Sigmoid colon (tissue), 7 donors: ENCODE measurements at regions of chr2 and their contacts with region 1.

Region 1: DNA sequence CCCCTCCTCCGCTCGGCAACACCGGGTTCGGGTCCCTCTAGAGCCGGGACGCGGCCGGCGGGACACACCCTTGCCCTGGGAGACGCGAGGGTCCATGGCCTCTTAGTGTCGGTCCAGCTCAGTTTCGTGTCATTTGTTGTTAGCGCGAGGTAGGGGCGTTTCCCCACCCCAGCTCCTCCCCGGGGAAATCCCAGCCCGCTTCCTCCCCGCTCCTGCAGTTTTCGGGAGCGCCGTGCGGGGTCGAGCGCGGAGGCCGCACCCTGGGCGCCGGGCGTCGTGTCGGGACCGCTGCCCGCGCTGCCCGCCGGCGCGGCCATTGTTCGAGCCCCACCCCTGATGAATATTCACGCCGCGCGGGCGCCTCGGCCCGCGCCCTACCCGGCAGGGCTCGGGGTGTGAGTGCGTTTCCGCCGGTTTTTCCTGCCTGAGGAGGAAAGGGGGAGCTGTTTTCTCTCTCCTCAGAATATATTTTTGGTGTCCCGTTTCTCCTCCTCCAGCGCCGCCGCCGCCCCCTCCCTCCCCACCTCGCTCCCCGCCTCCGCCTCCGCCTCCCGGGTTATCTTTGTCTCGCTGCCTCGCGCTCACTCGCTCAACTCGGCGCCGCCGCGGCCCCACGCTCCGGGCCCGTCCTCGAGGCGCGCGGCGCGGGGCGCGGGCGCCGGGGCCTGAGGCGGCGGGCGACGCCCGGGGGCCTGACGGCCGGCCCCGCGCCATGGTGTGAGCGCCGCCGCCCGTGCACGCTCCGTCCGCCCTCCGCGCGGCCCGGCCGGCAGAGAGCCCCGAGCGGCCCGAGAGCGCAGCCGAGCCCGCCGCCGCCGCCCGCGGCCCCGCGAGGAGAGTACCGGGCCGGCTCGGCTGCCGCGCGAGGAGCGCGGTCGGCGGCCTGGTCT is at the start of gene MAP4K4:
- DNase-seq: peak; percentile 92
- H3K4me3 ChIP-seq: peak within 1 kb of the TSS; percentile 64 to 76 (median 68)
- H3K27ac ChIP-seq: peak within 1 kb of the TSS; percentile 88 to 90 (median 88)
- H3K4me1 ChIP-seq: peaks cover 0 to 41% (median 17%) of the 10 kb centered on the region in 4 donors
- H3K27me3 ChIP-seq: no peaks in the 10 kb centered on the region
- CTCF ChIP-seq: peak in 1 of 4 experiments; percentile 16
- EP300 ChIP-seq: no peak
- POLR2A ChIP-seq: no peak
- total RNA-seq, gene MAP4K4: 37.2 to 62.9 (median 48.9) TPM

Region 2: DNA sequence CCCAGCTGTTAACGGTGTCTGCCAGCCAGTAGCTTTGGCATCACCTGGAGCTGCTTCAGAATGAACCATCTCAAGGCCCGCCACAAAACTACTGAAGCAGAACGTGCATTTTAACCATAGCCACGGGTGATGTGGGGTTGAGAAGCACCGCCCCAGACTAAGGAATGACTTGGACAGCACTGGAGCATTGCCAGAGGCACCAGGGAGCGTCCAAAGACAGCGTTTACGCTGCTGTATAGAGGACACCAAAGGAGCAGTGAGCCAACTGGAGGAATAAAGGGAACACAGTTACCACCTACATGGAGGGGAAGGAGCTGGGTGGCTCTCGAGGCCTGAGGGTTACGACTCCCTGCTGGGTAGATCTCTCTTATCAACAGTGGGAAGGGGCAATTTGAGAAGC is 1346.7 kb before region 1 on chr2:
- intact Hi-C with region 1: no loop called
- DNase-seq: no peak
- H3K4me3 ChIP-seq: no peak overlapping the region
- H3K27ac ChIP-seq: no peak overlapping the region
- H3K4me1 ChIP-seq: no peaks in the 10 kb centered on the region
- H3K27me3 ChIP-seq: no peaks in the 10 kb centered on the region
- CTCF ChIP-seq: no peak
- EP300 ChIP-seq: no peak
- POLR2A ChIP-seq: no peak

Region 3: GRCh38 chr2:101524806-101525430 is 172.5 kb before region 1 on chr2:
- intact Hi-C with region 1: loop called (anchors 5 kb)
- DNase-seq: peak; percentile 88
- H3K4me3 ChIP-seq: no peak overlapping the region
- H3K27ac ChIP-seq: peak overlapping the region in 2 of 4 donors; percentile 39 to 54
- H3K4me1 ChIP-seq: peaks cover 0 to 26% (median 6%) of the 10 kb centered on the region in 4 donors
- H3K27me3 ChIP-seq: no peaks in the 10 kb centered on the region
- CTCF ChIP-seq: no peak
- EP300 ChIP-seq: peak in 3 of 4 donors; percentile 20 to 63 (median 25)
- POLR2A ChIP-seq: no peak

Region 4: GRCh38 chr2:101655702-101656422 is 41.5 kb before region 1 on chr2:
- intact Hi-C with region 1: loop called (anchors 2 kb)
- DNase-seq: peak; percentile 81
- H3K4me3 ChIP-seq: no peak overlapping the region
- H3K27ac ChIP-seq: peak overlapping the region in 3 of 4 donors; percentile 69 to 76 (median 74)
- H3K4me1 ChIP-seq: peaks cover 0 to 28% (median 15%) of the 10 kb centered on the region in 4 donors
- H3K27me3 ChIP-seq: no peaks in the 10 kb centered on the region
- CTCF ChIP-seq: no peak
- EP300 ChIP-seq: no peak
- POLR2A ChIP-seq: no peak